RWPE1 (cell line): ENCODE measurements at regions of chr1 and their contacts with region 1.

Region 1: DNA sequence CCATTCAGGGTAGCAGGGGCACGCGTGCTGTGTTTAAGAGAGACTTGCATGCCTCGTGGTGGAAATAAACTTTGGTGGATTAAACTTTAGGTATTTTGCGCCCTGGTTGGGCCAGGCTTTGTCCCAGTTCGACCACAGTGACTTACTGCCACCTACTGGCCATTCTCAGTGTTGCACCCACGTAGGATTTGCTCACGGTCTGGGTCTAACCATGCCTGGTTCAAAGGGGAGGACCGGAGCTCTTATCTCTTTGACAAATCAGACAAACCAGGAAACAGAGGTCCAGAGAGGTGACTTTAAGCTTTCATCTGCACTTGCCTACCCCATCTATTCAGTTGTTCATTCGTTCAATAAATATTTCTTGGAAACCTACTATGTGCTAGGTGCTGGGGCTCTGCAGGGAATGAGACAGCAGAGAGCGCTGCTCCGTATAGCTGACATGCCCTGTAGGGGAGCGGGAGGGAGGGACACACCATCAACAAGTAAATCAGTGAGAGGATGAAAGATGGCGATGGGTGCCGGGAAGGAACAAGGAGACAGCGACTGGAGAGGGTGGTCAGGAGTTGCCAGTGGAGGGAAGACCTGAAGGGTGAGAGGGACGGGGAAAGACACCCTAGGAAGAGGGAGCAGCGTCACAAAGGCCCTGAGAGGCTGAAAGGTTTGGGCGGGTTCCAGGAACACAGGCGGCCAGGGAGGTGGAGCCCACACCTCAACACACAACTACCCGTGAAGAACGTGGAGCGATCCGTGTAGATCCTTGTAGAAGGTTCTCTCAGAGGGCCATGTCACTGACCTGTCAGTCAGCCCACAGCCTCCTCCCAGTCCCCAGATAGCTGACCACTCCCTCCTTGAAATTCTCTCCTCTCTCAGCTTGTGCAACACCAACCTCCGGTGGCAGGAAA is 27.2 kb upstream of the TINAGL1 start:
- DNase-seq: peak; percentile 80
- H3K27ac ChIP-seq: peak overlapping the region; percentile 73
- CTCF ChIP-seq: peak; percentile 93

Region 2: GRCh38 chr1:31422505-31423319 is 126.4 kb before region 1 on chr1:
- CTCF ChIA-PET with region 1: interaction called, 10 read pairs
- POLR2A ChIA-PET with region 1: no interaction called
- DNase-seq: peak; percentile 94
- H3K27ac ChIP-seq: peak overlapping the region; percentile 87
- CTCF ChIP-seq: peak; percentile 93

Region 3: GRCh38 chr1:31663622-31664452 is 114.7 kb after region 1 on chr1:
- CTCF ChIA-PET with region 1: no interaction called
- POLR2A ChIA-PET with region 1: no interaction called
- DNase-seq: peak; percentile 59
- H3K27ac ChIP-seq: peak overlapping the region; percentile 97
- CTCF ChIP-seq: peak; percentile 82